ENCODE measurements at regions of chr22 and their contacts with region 1.

Region 1: GRCh38 chr22:24060375-24060788 is 49.3 kb downstream of the CABIN1 start:
- DNase-seq: no peak
- H3K4me3 ChIP-seq: no peak overlapping the region
- H3K27ac ChIP-seq: no peak overlapping the region
- H3K4me1 ChIP-seq: no peaks in the 10 kb centered on the region
- H3K27me3 ChIP-seq: no peaks in the 10 kb centered on the region
- CTCF ChIP-seq: no peak

Region 2: DNA sequence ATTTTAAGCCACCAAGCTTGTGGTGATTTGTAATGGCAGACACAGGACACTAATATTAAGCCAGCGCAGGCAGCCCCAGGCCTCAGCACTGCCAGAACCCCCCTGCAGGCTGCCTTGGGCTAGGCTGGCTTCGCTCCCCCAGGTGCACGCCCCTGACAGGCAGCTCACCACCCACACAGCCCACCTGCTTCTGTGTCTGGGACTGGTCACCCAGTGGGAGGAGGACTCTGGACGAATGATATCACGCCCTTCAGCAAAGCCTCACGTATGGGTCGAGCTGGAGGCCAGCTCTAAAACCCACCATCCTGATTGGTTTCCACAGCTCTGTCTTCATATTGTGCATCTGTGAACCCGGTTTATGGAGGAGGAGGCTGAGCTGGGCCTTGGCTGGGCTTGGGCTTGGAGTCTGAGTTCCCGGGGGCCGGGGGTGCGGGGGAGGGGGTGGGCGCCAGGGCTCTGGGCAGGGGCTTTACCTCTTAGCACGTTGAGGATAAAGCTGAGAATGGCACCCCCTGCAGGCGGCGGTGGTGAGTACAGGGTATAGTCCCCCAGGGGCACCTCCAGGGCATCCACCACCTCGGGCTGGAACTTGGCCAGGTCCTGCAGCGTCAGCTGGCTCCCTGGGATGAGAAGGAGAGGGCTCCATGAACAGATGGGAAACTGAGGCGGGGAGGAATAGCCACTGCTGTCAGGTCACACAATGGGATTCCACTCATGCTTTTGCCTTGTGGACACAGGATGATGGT is 170.7 kb after region 1 on chr22:
- CTCF ChIA-PET with region 1: interaction called, 12 read pairs
- POLR2A ChIA-PET with region 1: no interaction called
- intact Hi-C with region 1: no loop called
- DNase-seq: peak; percentile 53
- H3K4me3 ChIP-seq: no peak overlapping the region
- H3K27ac ChIP-seq: no peak overlapping the region
- H3K4me1 ChIP-seq: no peaks in the 10 kb centered on the region
- H3K27me3 ChIP-seq: no peaks in the 10 kb centered on the region
- CTCF ChIP-seq: peak; percentile 56

Region 3: DNA sequence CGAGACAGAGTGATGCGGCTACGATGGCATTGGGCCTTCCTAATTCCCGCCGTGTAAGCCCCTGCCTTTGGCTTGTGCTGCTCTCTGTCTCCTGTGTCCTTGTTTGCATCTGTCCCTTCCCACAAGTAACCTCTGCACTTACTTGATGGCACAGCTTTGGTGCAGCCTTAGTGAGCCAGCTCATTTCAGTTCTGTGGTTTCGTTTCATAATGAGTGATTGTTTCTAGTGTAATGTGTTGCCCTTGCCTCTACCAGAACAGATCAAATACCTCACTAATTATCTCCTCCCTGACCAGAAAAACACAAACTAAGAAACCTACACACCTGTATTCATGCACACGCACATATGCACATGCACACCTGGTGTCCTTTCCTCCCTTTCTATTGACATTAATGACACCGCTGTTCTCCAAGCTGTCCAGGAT is 1562.9 kb after region 1 on chr22:
- CTCF ChIA-PET with region 1: no interaction called
- POLR2A ChIA-PET with region 1: interaction called, 21 read pairs
- intact Hi-C with region 1: no loop called
- DNase-seq: no peak
- H3K4me3 ChIP-seq: no peak overlapping the region
- H3K27ac ChIP-seq: no peak overlapping the region
- H3K4me1 ChIP-seq: no peaks in the 10 kb centered on the region
- H3K27me3 ChIP-seq: no peaks in the 10 kb centered on the region
- CTCF ChIP-seq: no peak